ENCODE measurements at regions of chr13 and their contacts with region 1.

Region 1: GRCh38 chr13:31236211-31236786 is 36.5 kb downstream of the B3GLCT start:
- DNase-seq: no peak
- ATAC-seq: no peak
- H3K4me3 ChIP-seq: no peak overlapping the region
- H3K27ac ChIP-seq: no peak overlapping the region
- H3K4me1 ChIP-seq: no peaks in the 10 kb centered on the region
- H3K27me3 ChIP-seq: no peaks in the 10 kb centered on the region
- CTCF ChIP-seq: peak; percentile 50 to 67 (median 52)
- POLR2A ChIP-seq: no peak

Region 2: DNA sequence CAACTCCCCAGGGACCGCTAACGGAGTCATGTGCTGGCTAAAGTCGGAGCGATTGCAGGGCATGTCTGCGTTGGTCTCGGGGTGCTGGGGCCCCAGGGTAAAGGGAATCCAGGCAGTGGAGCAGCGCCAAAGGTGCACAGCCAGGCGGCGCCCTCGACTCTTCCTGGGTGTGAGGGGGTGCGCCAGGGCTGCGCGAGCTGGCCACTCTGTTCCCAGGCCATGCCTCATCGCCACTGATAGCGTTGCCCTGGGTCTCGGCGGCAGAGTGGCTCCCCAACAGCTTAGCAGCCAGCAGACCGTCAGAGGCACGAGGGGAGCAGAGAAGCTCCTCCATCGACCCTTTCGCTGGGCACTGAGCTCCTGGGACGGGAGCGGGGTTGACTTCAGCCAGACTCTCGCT is 116.2 kb after region 1 on chr13:
- in situ Hi-C with region 1: no loop called
- intact Hi-C with region 1: no loop called
- DNase-seq: no peak
- ATAC-seq: no peak
- H3K4me3 ChIP-seq: no peak overlapping the region
- H3K27ac ChIP-seq: no peak overlapping the region
- H3K4me1 ChIP-seq: no peaks in the 10 kb centered on the region
- H3K27me3 ChIP-seq: no peaks in the 10 kb centered on the region
- CTCF ChIP-seq: no peak
- POLR2A ChIP-seq: no peak

Region 3: GRCh38 chr13:31424117-31424729 is 187.9 kb after region 1 on chr13:
- in situ Hi-C with region 1: loop called (anchors 5 to 10 kb)
- intact Hi-C with region 1: loop called (anchors 1 kb)
- DNase-seq: peak; percentile 43 to 66
- ATAC-seq: peak; percentile 89 to 95
- H3K4me3 ChIP-seq: no peak overlapping the region
- H3K27ac ChIP-seq: no peak overlapping the region
- H3K4me1 ChIP-seq: no peaks in the 10 kb centered on the region
- H3K27me3 ChIP-seq: no peaks in the 10 kb centered on the region
- CTCF ChIP-seq: peak; percentile 50 to 87 (median 67)
- POLR2A ChIP-seq: no peak

Region 4: DNA sequence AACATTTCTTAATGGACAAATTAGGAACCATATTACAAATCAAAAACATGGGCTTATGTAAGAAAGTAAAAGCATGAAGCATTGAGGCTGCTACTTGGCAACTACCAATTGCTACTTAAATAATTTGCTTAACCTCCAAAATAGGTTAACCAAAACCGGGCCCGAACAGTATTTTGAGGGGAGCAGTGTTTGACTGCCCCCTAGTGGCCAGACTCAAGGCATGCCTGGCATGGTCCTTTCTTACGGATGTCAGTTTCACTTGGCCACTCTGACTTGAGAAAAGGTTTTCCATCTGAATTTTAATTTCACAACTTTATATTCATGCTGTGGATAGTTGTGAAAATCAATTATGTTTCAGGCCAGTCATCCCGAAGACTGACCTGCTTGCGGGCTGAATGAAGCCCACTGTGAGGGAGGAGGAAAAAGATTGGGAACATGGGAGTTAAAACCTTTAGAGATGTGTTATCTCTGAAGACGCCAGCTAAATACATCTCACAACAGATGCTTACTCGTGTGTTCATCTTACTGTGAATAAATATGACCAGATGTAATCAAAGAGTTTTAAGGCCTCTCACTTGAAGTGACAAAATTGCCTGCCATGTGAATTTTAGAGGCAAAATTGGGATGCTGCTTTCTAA is 505.9 kb after region 1 on chr13:
- in situ Hi-C with region 1: loop called (anchors 10 to 25 kb)
- intact Hi-C with region 1: no loop called
- DNase-seq: peak; percentile 20 to 34
- ATAC-seq: peak in 1 of 2 donors; percentile 71
- H3K4me3 ChIP-seq: no peak overlapping the region
- H3K27ac ChIP-seq: no peak overlapping the region
- H3K4me1 ChIP-seq: no peaks in the 10 kb centered on the region
- H3K27me3 ChIP-seq: no peaks in the 10 kb centered on the region
- CTCF ChIP-seq: peak; percentile 58 to 97 (median 80)
- POLR2A ChIP-seq: no peak

Measured in gastrocnemius medialis (tissue), 4 donors.